GM12878 (cell line): ENCODE measurements at regions of chr5 and their contacts with region 1.

Region 1: GRCh38 chr5:147628058-147628895 is 118.4 kb upstream of the DPYSL3 start:
- DNase-seq: peak; percentile 28
- ATAC-seq: peak; percentile 93
- H3K4me3 ChIP-seq: no peak overlapping the region
- H3K27ac ChIP-seq: no peak overlapping the region
- H3K4me1 ChIP-seq: no peaks in the 10 kb centered on the region
- H3K27me3 ChIP-seq: no peaks in the 10 kb centered on the region; a peak in 1 of 4 replicates
- CTCF ChIP-seq: peak; percentile 71 to 81 (median 72)
- EP300 ChIP-seq: no peak
- POLR2A ChIP-seq: no peak
- RAD21 ChIP-seq: peak; percentile 82

Region 2: GRCh38 chr5:147643142-147643541 is 14.9 kb after region 1 on chr5:
- CTCF ChIA-PET with region 1: interaction called, 12 read pairs
- POLR2A ChIA-PET with region 1: interaction called, 10 read pairs
- RAD21 ChIA-PET with region 1: no interaction called
- SMC1A ChIA-PET with region 1: interaction called, 16 read pairs
- in situ Hi-C with region 1: no loop called
- intact Hi-C with region 1: no loop called
- DNase-seq: no peak
- ATAC-seq: no peak
- H3K4me3 ChIP-seq: no peak overlapping the region
- H3K27ac ChIP-seq: no peak overlapping the region
- H3K4me1 ChIP-seq: no peaks in the 10 kb centered on the region
- H3K27me3 ChIP-seq: no peaks in the 10 kb centered on the region
- CTCF ChIP-seq: no peak
- EP300 ChIP-seq: no peak
- POLR2A ChIP-seq: no peak
- RAD21 ChIP-seq: no peak

Region 3: DNA sequence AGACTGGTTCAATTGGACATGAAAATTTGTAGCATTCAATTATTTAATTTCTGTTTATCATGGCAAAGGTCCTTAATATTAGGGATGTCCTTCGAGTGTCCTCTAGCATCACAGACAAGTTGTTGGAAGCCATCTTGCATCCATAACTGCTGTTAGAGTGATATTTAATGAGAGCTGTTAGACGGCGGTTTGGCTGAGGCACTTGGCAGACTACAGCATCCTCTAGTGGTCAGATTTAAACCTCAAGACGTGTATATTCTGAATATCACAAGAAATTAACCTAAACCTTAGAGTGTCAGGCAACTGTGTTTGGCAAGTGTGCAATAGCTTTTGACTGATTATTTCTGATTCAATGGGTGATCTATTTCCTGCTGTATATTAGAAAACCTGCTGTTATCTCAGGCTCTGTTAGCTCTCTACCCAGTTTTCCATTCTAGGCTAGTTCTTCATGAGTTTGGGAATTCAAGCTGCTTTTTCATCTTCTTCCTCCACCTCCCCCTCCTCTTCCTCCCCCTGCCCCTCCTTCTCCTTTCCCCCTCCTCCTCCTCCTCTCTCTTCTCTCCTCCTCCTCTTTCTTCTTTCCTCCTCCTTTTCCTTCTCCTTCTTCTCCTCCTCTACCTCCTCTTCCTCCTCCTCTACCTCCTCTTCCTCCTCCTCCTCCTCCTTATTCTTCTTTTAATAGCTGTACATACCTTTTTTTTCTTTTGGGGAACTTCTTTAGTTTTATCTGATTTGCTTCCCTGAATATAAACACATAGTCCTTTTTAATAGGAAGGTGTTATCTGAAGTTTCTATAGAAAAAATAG is 194.6 kb after region 1 on chr5:
- CTCF ChIA-PET with region 1: interaction called, 108 read pairs
- POLR2A ChIA-PET with region 1: no interaction called
- RAD21 ChIA-PET with region 1: interaction called, 26 read pairs
- SMC1A ChIA-PET with region 1: interaction called, 15 read pairs
- in situ Hi-C with region 1: loop called (anchors 5 kb)
- intact Hi-C with region 1: loop called (anchors 1 kb)
- DNase-seq: peak; percentile 12
- ATAC-seq: peak; percentile 94
- H3K4me3 ChIP-seq: no peak overlapping the region
- H3K27ac ChIP-seq: no peak overlapping the region
- H3K4me1 ChIP-seq: no peaks in the 10 kb centered on the region
- H3K27me3 ChIP-seq: no peaks in the 10 kb centered on the region; a peak in 1 of 4 replicates
- CTCF ChIP-seq: peak; percentile 91 to 95 (median 93)
- EP300 ChIP-seq: no peak
- POLR2A ChIP-seq: no peak
- RAD21 ChIP-seq: peak; percentile 94